Common myeloid progenitor, CD34-positive (primary cell): ENCODE measurements at regions of chr21 and their contacts with region 1.

Region 1: DNA sequence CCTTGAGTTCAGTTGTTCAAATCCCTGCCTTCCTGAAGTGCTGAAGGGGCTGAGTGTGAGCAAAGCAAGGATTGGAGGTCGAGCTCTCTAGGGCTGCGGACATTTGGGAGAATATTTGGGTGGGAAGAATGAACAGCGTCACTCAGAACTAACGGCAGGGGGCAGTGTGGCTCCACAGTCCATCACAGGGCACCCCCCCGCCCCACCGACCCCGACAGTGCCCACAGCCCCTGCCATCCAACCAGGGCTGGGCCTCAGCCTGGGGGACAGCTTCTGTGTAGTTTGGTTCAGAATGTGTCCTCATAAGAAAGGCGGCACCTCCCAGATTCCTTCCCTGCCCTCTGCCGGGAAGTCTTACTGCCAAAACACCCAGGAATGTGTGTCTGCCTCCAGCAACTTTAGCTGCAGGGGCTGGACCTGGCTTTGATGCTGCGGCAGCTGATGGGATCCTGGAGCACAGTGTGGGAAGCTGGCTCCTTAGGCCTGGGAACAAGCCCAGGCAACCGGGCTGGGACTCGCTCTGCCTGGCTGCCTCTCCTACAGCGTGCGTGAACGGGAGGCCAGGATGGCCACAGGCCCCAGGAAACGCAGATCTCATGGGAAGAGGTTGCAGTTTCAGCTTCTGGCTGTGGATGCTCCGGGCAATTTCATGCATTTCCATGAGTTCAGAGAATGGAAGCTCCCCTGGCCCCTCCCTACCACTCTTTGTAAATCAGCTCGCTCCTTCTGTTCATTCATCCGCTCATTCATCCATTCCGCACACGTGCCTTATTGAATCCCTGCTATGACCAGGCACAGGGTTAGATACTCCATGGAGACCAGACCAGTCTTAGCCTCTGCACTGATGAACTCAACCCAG is 104.9 kb upstream of the TMPRSS2 start:
- DNase-seq: peak; percentile 32 to 55 (median 45)
- H3K4me3 ChIP-seq: no peak overlapping the region
- H3K27ac ChIP-seq: no peak overlapping the region
- H3K4me1 ChIP-seq: peaks cover 0 to 6% (median 3%) of the 10 kb centered on the region in 4 experiments
- H3K27me3 ChIP-seq: peaks cover 0 to 3% (median 0%) of the 10 kb centered on the region in 5 experiments

Region 2: DNA sequence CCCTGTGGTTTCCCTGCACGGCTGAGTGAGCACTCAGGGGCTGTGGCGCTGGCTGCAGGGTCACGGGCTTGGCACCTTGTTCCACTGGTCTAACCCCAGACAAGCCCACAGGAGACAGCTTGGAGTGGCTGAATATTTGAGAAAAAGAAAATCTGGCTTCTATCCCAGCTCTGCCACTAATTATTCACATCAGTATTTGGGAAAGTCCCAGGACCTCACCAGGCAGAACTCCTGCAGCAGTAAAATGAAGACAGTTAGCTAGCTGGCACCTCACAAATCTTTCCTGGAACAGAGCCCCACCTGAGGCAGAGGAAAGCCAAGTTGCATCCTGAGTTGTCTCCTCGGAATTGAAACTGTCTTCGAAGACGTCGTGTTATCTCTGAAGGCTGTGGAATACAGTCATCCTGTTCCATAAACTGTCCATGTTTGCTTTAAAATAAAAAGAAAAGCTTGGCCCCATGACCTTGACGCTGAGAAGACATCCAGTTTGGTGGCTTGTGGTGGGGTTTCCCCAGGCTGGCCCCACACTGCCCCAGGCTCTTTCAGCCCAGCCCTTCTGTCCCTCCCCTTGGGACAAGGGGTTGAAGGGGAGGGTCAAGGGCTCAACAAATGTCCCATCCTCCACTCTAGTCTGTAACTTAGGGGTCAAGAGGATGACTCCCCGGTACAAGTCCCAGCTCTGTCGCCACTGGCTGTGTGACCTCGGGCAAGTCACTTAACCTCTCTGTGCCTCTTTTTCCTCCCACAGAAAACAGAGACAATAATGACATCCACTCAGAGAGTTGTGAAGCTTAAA is 11.1 kb before region 1 on chr21:
- CTCF ChIA-PET with region 1: interaction called, 24 read pairs
- POLR2A ChIA-PET with region 1: no interaction called
- DNase-seq: no peak
- H3K4me3 ChIP-seq: no peak overlapping the region
- H3K27ac ChIP-seq: no peak overlapping the region
- H3K4me1 ChIP-seq: peaks cover 0 to 24% (median 4%) of the 10 kb centered on the region in 4 experiments
- H3K27me3 ChIP-seq: peaks cover 0 to 3% (median 0%) of the 10 kb centered on the region in 5 experiments

Region 3: DNA sequence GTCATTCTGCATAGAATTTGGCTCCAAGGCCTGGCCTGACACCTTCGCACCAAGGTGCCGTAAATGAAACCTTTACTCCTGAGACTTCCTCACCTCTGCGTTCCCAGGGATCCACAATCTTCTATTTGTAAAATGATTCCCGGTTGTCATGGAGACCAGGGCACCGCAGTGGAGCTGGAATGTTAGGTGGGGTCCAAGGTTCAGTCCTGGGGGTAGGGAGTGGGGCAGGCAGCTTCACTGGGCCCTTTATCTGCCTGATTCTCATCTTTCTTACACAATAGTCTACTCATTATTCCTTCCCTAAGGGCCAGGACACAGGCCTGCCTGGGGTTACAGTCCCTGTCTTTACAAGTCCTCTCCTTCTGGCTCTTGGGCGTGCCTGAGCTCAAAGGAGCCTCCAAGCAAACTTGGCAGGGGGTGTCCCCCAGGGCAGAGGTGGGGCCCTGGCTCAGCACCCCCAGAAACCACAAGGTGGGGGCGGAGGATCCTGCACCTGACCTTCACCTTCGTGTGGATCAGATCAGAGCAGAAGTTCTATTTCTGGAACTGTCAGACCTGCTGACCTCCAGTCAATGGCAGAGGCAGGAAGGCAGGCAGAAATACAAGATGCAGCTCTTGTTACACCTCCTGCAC is 102.9 kb after region 1 on chr21:
- CTCF ChIA-PET with region 1: no interaction called
- POLR2A ChIA-PET with region 1: no interaction called
- DNase-seq: no peak
- H3K4me3 ChIP-seq: no peak overlapping the region
- H3K27ac ChIP-seq: no peak overlapping the region
- H3K4me1 ChIP-seq: peaks cover 0 to 15% (median 4%) of the 10 kb centered on the region in 4 experiments
- H3K27me3 ChIP-seq: peaks cover 0 to 63% (median 25%) of the 10 kb centered on the region in 5 experiments

Region 4: GRCh38 chr21:41816220-41817165 is 203.6 kb after region 1 on chr21:
- CTCF ChIA-PET with region 1: interaction called, 51 read pairs
- POLR2A ChIA-PET with region 1: no interaction called
- DNase-seq: peak; percentile 59 to 67 (median 66)
- H3K4me3 ChIP-seq: peak overlapping the region in 1 of 7 experiments; percentile 4
- H3K27ac ChIP-seq: no peak overlapping the region
- H3K4me1 ChIP-seq: peaks cover 0 to 5% (median 4%) of the 10 kb centered on the region in 4 experiments
- H3K27me3 ChIP-seq: no peaks in the 10 kb centered on the region